Mammary epithelial cell (primary cell): ENCODE measurements at regions of chr2 and their contacts with region 1.

Region 1: DNA sequence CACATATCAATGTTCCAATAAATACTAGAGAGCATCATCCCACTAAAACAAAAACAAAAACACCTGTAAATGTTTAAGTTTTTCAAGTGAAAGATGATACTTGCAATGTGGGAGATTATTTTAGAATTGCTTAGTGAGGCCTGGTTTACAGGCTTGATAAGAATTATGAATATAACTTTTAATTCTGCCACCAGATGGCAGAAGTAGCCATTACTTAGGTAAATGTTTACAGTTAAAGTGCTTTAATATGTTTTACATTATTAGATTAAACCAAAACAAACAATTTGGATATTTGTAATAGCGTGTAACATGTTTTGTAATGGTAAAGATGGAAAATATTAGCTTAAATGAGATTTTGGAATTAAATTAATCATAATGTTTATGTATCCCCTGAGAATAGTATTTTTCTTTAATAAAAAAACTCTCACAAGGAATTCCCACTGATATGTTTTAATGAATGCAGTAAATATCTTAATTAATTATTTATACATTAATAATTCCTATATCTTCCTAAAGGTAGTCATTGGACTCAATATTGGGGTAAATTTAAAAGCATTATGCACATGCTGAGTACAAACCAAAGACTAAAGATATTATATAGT is 522.0 kb downstream of the SPAG16 start:
- DNase-seq: peak; percentile 12
- H3K4me3 ChIP-seq: no peak overlapping the region
- H3K27ac ChIP-seq: no peak overlapping the region
- H3K4me1 ChIP-seq: no peaks in the 10 kb centered on the region
- H3K27me3 ChIP-seq: no peaks in the 10 kb centered on the region
- CTCF ChIP-seq: peak; percentile 9 to 33

Region 2: GRCh38 chr2:213751446-213751845 is 54.8 kb before region 1 on chr2:
- CTCF ChIA-PET with region 1: no interaction called
- dilution Hi-C with region 1: no loop called
- in situ Hi-C with region 1: no loop called
- intact Hi-C with region 1: no loop called
- DNase-seq: no peak
- H3K4me3 ChIP-seq: no peak overlapping the region
- H3K27ac ChIP-seq: no peak overlapping the region
- H3K4me1 ChIP-seq: no peaks in the 10 kb centered on the region
- H3K27me3 ChIP-seq: no peaks in the 10 kb centered on the region
- CTCF ChIP-seq: no peak

Region 3: GRCh38 chr2:214069265-214069664 is 263.0 kb after region 1 on chr2:
- CTCF ChIA-PET with region 1: no interaction called
- dilution Hi-C with region 1: no loop called
- in situ Hi-C with region 1: no loop called
- intact Hi-C with region 1: loop called (anchors 10 kb)
- DNase-seq: peak; percentile 94
- H3K4me3 ChIP-seq: no peak overlapping the region
- H3K27ac ChIP-seq: peak overlapping the region; percentile 72
- H3K4me1 ChIP-seq: peaks cover 3% of the 10 kb centered on the region
- H3K27me3 ChIP-seq: no peaks in the 10 kb centered on the region
- CTCF ChIP-seq: no peak